ENCODE measurements at regions of chr13 and their contacts with region 1.

Region 1: DNA sequence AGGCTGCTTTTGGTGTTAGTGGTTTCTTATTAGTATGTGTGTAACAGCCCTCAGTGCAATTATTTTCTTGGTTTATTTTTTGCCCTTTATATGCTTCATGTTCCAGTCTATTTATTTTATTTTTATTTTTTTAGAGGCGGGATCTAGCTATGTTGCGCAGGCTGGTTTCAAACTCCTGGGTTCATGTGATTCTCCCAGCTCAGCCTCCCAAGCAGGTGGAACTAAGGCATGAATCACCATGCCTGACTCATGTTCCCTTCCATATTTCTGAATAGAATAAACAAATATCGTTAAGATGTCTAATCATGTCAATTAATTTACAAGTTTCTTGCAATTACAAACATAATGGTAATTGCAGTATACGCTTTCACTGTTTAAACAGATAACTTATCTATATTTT is 11.7 kb downstream of the SKA3 start:
- DNase-seq: peak; percentile 57
- ATAC-seq: peak; percentile 66
- H3K4me3 ChIP-seq: no peak overlapping the region
- H3K27ac ChIP-seq: no peak overlapping the region
- H3K4me1 ChIP-seq: peaks cover 8% of the 10 kb centered on the region; the same call in 1 of the 2 replicates
- H3K27me3 ChIP-seq: no peaks in the 10 kb centered on the region
- CTCF ChIP-seq: no peak

Region 2: GRCh38 chr13:19695829-19696228 is 1468.8 kb before region 1 on chr13:
- CTCF ChIA-PET with region 1: no interaction called
- POLR2A ChIA-PET with region 1: interaction called, 10 read pairs
- intact Hi-C with region 1: no loop called
- DNase-seq: no peak
- ATAC-seq: no peak
- H3K4me3 ChIP-seq: no peak overlapping the region
- H3K27ac ChIP-seq: no peak overlapping the region
- H3K4me1 ChIP-seq: 0 out of 2 replicates have a peak, but pooled peaks cover 10% of the 10 kb centered on the region
- H3K27me3 ChIP-seq: no peaks in the 10 kb centered on the region
- CTCF ChIP-seq: no peak

Region 3: GRCh38 chr13:21256351-21256761 is 91.7 kb after region 1 on chr13:
- CTCF ChIA-PET with region 1: no interaction called
- POLR2A ChIA-PET with region 1: no interaction called
- intact Hi-C with region 1: no loop called
- DNase-seq: no peak
- ATAC-seq: no peak
- H3K4me3 ChIP-seq: no peak overlapping the region
- H3K27ac ChIP-seq: no peak overlapping the region
- H3K4me1 ChIP-seq: no peaks in the 10 kb centered on the region
- H3K27me3 ChIP-seq: no peaks in the 10 kb centered on the region
- CTCF ChIP-seq: no peak